ENCODE measurements at regions of chr4 and their contacts with region 1.

Region 1: DNA sequence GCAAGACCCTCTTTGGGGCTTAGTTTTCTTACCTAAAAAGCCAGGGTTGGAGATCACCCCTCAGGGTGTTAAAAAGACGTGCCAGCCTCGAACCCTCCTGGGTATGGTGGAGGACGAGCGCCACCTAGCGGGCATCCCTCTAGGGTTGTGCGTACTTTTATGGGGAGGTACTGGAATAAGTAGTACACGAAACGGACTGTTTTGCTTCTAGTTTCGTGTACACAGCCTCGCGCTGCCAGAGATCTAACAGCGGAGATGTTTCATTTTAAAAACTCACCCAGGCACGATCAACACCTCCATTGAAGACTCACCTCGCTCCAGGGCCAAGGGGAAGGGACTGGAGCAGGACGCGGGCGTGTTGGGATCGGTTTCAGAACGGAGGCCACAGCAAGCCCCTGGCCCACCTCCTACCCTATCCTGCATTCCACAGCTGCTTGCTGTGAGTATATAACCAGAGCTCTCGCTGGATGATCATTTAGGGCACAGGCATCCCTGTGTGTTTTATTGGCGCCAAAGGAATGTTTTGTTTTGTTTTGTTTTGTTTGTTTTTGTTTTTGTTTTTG is 4.8 kb upstream of the NKX3-2 start:
- DNase-seq: peak; percentile 74
- ATAC-seq: peak; percentile 54
- H3K4me3 ChIP-seq: peak overlapping the region; percentile 48
- H3K27ac ChIP-seq: no peak overlapping the region
- H3K4me1 ChIP-seq: no peaks in the 10 kb centered on the region; the same call in 1 of the 2 replicates
- H3K27me3 ChIP-seq: peaks cover 32% of the 10 kb centered on the region
- CTCF ChIP-seq: peak; percentile 93
- POLR2A ChIP-seq: peak; percentile 52; the same call in 1 of the 2 replicates
- RAD21 ChIP-seq: peak; percentile 98

Region 2: DNA sequence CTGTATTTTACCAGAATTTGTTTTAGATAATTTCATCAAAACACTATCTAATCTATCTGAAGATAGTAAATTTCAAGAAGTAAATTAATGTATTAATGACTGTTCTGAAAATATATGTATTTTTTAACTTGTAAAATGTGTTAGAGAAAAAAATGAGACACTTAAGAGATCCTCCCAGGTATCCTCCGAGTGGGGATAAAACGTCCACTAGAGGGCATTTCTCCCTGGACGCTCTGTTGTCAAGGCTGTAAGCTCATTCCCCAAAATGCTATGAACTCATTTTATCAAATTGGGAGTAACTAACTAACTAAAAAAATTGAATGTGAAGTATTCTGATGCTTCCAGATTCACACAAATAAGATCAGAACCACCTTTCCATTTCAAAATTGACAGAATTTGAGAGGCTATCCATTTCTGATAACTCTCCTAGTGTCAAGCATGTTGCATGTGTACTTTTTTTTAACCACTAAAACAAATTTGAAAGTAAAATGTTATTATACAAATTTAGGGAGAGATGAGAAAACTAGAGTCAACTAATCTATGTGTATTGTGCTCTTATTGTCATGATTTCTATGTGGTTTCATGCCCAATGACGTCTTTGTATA is 1783.1 kb before region 1 on chr4:
- CTCF ChIA-PET with region 1: no interaction called
- POLR2A ChIA-PET with region 1: no interaction called
- dilution Hi-C with region 1: no loop called
- in situ Hi-C with region 1: no loop called
- intact Hi-C with region 1: loop called (anchors 5 kb)
- DNase-seq: peak; percentile 37
- ATAC-seq: peak; percentile 75
- H3K4me3 ChIP-seq: no peak overlapping the region
- H3K27ac ChIP-seq: no peak overlapping the region
- H3K4me1 ChIP-seq: no peaks in the 10 kb centered on the region
- H3K27me3 ChIP-seq: no peaks in the 10 kb centered on the region
- CTCF ChIP-seq: peak; percentile 51
- POLR2A ChIP-seq: no peak
- RAD21 ChIP-seq: peak; percentile 43

Region 3: DNA sequence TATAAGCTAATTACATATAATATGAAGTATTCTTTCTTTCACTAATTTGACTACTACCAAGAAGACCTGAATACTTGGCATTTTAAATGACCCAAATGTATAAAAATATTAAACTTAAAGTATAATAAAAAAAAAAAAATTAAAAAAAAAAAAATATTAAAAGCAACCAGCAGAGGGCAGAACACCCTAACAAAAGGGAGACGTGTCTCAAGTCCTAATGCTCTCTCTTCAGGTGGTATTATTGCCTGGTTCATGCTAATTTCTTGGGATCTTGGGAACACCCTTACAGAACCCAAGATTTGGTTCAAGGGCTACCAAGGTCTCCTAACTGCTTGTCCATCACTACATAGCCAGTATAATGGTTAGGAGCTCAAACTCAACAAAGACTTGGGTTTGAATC is 819.7 kb before region 1 on chr4:
- CTCF ChIA-PET with region 1: no interaction called
- POLR2A ChIA-PET with region 1: no interaction called
- dilution Hi-C with region 1: no loop called
- in situ Hi-C with region 1: loop called (anchors 5 kb)
- intact Hi-C with region 1: loop called (anchors 1 kb)
- DNase-seq: peak; percentile 15
- ATAC-seq: peak; percentile 32; the same call in 1 of the 2 replicates
- H3K4me3 ChIP-seq: no peak overlapping the region
- H3K27ac ChIP-seq: no peak overlapping the region
- H3K4me1 ChIP-seq: no peaks in the 10 kb centered on the region
- H3K27me3 ChIP-seq: no peaks in the 10 kb centered on the region
- CTCF ChIP-seq: peak; percentile 46
- POLR2A ChIP-seq: no peak
- RAD21 ChIP-seq: peak; percentile 58

Region 4: DNA sequence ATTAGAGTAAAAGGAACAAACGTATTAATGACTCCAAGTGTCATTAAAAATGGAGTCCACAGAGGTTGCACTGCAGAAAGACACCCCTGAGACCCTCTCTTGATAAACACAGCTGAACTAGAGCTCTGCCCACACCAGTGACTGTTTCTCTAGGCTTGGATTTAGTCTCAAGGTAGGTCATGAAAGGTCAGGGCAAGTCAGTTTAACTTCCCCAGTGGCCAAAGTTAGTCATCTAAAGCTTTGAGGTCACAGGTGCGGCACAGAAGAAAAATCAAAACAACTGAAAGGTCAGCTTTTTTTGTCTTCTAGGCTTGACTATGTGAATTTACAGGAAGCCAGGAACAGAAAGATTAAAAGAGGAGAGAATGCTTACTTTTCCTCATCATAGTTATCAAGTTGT is 814.5 kb before region 1 on chr4:
- CTCF ChIA-PET with region 1: no interaction called
- POLR2A ChIA-PET with region 1: no interaction called
- dilution Hi-C with region 1: no loop called
- in situ Hi-C with region 1: loop called (anchors 5 kb)
- intact Hi-C with region 1: loop called (anchors 1 kb)
- DNase-seq: no peak
- ATAC-seq: no peak
- H3K4me3 ChIP-seq: no peak overlapping the region
- H3K27ac ChIP-seq: no peak overlapping the region
- H3K4me1 ChIP-seq: no peaks in the 10 kb centered on the region
- H3K27me3 ChIP-seq: no peaks in the 10 kb centered on the region
- CTCF ChIP-seq: no peak
- POLR2A ChIP-seq: no peak
- RAD21 ChIP-seq: no peak

Region 5: DNA sequence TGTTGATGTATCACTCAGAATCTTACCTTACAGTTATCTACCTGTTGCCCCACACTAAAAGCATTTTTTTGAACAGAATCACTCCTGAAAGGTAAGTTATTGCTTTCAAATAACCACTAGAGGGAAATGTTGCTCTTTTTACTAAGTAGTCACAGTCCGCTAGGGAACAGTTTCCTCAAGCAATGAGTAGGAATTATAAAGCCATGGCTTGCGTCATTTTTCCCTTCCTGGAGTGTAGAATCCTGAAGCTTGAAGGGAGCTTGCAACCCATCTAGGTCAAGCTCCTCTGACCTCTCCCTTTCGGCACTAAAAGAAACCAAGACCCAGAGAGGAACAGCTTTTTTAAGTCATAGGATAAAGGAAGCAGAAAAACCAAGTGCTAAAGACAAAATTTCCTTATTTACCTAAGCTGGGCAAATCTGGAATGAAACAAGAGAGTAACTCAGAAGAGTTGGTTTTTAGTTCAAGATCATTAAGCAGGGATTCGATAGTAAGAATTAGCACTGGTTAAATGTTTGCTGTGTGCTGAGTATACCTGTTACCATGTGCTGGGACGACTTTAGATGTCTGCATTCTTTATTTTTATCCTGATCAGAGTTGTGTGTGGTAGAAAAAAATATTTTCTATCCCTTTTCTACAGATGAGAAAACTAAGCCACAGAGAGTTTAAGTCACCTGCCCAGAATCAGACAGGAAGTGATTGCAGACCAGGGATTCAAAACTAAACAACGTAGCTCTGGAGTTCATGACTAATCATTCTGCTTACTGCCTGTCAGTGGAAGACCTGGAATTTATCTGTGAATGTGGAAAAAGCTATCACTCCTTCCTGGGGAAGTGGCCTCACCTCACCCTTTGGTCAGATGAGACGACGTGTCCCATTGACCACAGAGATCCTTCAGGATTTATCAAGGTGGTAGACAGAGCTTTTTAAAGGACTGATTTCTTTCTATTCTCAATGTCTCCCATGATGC is 696.4 kb before region 1 on chr4:
- CTCF ChIA-PET with region 1: interaction called, 7 read pairs
- POLR2A ChIA-PET with region 1: no interaction called
- dilution Hi-C with region 1: no loop called
- in situ Hi-C with region 1: loop called (anchors 5 kb)
- intact Hi-C with region 1: loop called (anchors 1 kb)
- DNase-seq: peak; percentile 52
- ATAC-seq: peak; percentile 60
- H3K4me3 ChIP-seq: no peak overlapping the region
- H3K27ac ChIP-seq: no peak overlapping the region
- H3K4me1 ChIP-seq: no peaks in the 10 kb centered on the region
- H3K27me3 ChIP-seq: no peaks in the 10 kb centered on the region
- CTCF ChIP-seq: peak; percentile 49
- POLR2A ChIP-seq: no peak
- RAD21 ChIP-seq: peak; percentile 63

Region 6: DNA sequence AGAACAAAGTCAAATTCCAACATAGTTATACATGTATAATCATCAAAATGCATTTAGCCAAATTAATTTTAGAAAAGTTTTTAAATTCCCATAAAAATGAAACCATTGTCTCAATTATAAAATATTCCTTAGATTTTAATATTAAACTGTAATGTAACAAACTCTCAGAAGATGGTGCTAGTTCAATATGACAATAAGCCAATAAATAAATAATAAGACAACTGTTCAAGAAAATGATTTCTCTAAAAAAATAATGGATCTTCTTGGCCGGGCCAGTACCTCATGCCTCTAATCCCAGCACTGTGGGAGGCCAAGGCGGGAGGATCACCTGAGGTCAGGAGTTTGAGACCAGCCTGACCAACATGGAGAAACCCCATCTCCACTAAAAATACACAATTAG is 145.2 kb before region 1 on chr4:
- CTCF ChIA-PET with region 1: no interaction called
- POLR2A ChIA-PET with region 1: no interaction called
- dilution Hi-C with region 1: no loop called
- in situ Hi-C with region 1: no loop called
- intact Hi-C with region 1: loop called (anchors 5 kb)
- DNase-seq: no peak
- ATAC-seq: no peak
- H3K4me3 ChIP-seq: no peak overlapping the region
- H3K27ac ChIP-seq: no peak overlapping the region
- H3K4me1 ChIP-seq: no peaks in the 10 kb centered on the region
- H3K27me3 ChIP-seq: no peaks in the 10 kb centered on the region
- CTCF ChIP-seq: 0 out of 2 replicates have a peak, but pooled peaks have one; percentile 15
- POLR2A ChIP-seq: no peak
- RAD21 ChIP-seq: no peak

Region 7: DNA sequence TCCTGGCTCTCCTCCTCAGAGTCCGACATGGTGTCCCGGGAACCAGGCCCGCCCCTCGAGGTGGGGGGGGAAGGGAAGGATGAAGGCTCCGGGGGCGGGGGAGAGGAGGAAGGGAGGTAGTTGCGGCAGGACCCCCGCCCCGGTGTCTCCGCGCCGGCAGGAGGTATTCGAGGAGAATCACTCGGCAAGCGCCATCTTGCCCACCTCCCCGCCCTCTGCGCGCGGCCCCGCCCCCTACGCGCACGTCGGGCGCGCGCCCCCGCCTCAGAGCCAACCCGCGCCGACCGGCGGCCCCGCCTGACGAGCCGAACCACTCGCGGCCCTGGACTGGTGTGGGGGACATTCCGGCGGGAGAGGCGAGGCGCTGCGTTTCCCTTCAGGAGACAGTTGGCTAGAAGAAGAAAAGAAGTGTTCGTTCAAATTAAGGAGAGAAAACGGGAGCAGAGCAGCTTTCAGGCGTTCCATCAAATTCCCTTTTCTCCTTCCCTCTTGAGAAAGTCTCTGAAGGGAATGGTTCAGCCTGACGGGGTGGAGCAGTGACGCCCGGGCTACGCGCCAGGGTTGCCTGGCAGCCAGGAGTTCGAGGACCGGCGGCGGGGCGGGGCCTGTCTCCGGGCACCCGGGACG is 64.8 kb before region 1 on chr4 and contains the start of gene RAB28:
- CTCF ChIA-PET with region 1: no interaction called
- POLR2A ChIA-PET with region 1: interaction called, 3 read pairs
- dilution Hi-C with region 1: no loop called
- in situ Hi-C with region 1: no loop called
- intact Hi-C with region 1: loop called (anchors 2 kb)
- DNase-seq: peak; percentile 93
- ATAC-seq: peak; percentile 98
- H3K4me3 ChIP-seq: peak within 1 kb of the TSS; percentile 84
- H3K27ac ChIP-seq: peak within 1 kb of the TSS; percentile 100
- H3K4me1 ChIP-seq: no peaks in the 10 kb centered on the region
- H3K27me3 ChIP-seq: no peaks in the 10 kb centered on the region; the same call in 1 of the 2 replicates
- CTCF ChIP-seq: no peak
- POLR2A ChIP-seq: 0 out of 2 replicates have a peak, but pooled peaks have one; percentile 57
- RAD21 ChIP-seq: no peak
- total RNA-seq, gene RAB28: 7.5 and 11.4 TPM in 2 replicates

Measured in IMR-90 (cell line).